WTC11 (cell line): ENCODE measurements at regions of chr17 and their contacts with region 1.

Region 1: GRCh38 chr17:79789534-79790353 is 7.1 kb downstream of the CBX8 start:
- DNase-seq: peak; percentile 82
- ATAC-seq: peak; percentile 50
- H3K4me3 Mint-ChIP-seq: peak overlapping the region; percentile 65
- H3K27ac Mint-ChIP-seq: no peak overlapping the region
- H3K4me1 Mint-ChIP-seq: peaks cover 48% of the 10 kb centered on the region
- H3K27me3 Mint-ChIP-seq: peaks cover 83% of the 10 kb centered on the region
- CTCF ChIP-seq: peak; percentile 65

Region 2: DNA sequence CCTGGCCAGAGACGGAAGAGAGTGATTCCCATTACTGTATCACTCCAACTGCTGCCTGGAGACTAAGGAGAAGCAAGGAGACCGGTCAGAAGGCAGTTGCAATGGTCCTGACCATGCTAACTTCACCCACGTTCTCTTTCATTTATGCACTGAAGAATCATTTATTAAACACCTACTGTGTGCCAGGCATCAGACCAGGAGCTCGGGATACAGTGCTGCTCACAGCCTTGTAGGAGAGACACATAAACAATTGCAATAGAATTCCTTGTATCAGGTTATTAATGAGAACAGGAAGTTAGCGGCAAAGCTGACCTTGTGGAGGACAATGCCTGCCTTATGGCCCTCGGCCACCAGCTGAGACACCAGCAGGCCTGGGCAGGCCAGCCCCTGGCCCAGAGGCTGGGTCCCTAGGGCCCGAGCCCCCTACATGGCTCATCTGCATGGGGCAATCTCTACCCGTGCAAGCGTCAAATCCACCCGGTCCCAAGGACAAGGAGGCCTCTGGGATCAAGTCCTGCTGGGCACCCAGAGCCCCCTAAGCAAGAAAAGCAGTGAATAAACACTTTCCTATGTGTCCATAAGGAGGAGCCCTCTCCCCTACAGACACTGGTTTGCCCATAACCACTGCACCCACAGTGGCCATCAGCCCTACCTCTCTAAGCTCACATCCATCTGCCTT is 67.6 kb before region 1 on chr17:
- CTCF ChIA-PET with region 1: interaction called, 10 read pairs
- POLR2A ChIA-PET with region 1: no interaction called
- DNase-seq: peak; percentile 31
- ATAC-seq: peak; percentile 96
- H3K4me3 Mint-ChIP-seq: no peak overlapping the region
- H3K27ac Mint-ChIP-seq: no peak overlapping the region
- H3K4me1 Mint-ChIP-seq: peaks cover 8% of the 10 kb centered on the region; the same call in 1 of the 2 replicates
- H3K27me3 Mint-ChIP-seq: peaks cover 4% of the 10 kb centered on the region; the same call in 1 of the 2 replicates
- CTCF ChIP-seq: peak; percentile 27; the same call in 1 of the 2 replicates

Region 3: GRCh38 chr17:79777894-79778503 is 11.7 kb before region 1 on chr17 and contains the start of gene CBX2:
- CTCF ChIA-PET with region 1: interaction called, 45 read pairs
- POLR2A ChIA-PET with region 1: interaction called, 5 read pairs
- DNase-seq: peak; percentile 75
- ATAC-seq: peak; percentile 55
- H3K4me3 Mint-ChIP-seq: peak within 1 kb of the TSS; percentile 91
- H3K27ac Mint-ChIP-seq: peak within 1 kb of the TSS; percentile 93
- H3K4me1 Mint-ChIP-seq: peaks cover 54% of the 10 kb centered on the region
- H3K27me3 Mint-ChIP-seq: peaks cover 15% of the 10 kb centered on the region
- CTCF ChIP-seq: no peak
- total RNA-seq, gene CBX2: 78.1 to 85.5 TPM (median 78.7 TPM) in 3 replicates

Region 4: GRCh38 chr17:79803997-79804855 is 14.5 kb after region 1 on chr17:
- CTCF ChIA-PET with region 1: interaction called, 14 read pairs
- POLR2A ChIA-PET with region 1: interaction called, 3 read pairs
- DNase-seq: peak; percentile 50
- ATAC-seq: no peak; the same call in 1 of the 2 replicates
- H3K4me3 Mint-ChIP-seq: peak overlapping the region; percentile 53
- H3K27ac Mint-ChIP-seq: no peak overlapping the region
- H3K4me1 Mint-ChIP-seq: peaks cover 62% of the 10 kb centered on the region
- H3K27me3 Mint-ChIP-seq: peaks cover 100% of the 10 kb centered on the region
- CTCF ChIP-seq: no peak

Region 5: GRCh38 chr17:79810130-79811010 is 20.6 kb after region 1 on chr17:
- CTCF ChIA-PET with region 1: interaction called, 14 read pairs
- POLR2A ChIA-PET with region 1: interaction called, 3 read pairs
- DNase-seq: peak; percentile 83
- ATAC-seq: peak; percentile 74
- H3K4me3 Mint-ChIP-seq: peak overlapping the region; percentile 59
- H3K27ac Mint-ChIP-seq: no peak overlapping the region
- H3K4me1 Mint-ChIP-seq: peaks cover 40% of the 10 kb centered on the region
- H3K27me3 Mint-ChIP-seq: peaks cover 92% of the 10 kb centered on the region
- CTCF ChIP-seq: no peak

Region 6: GRCh38 chr17:79826204-79826680 is 36.5 kb after region 1 on chr17:
- CTCF ChIA-PET with region 1: no interaction called
- POLR2A ChIA-PET with region 1: no interaction called
- DNase-seq: no peak
- ATAC-seq: no peak
- H3K4me3 Mint-ChIP-seq: no peak overlapping the region
- H3K27ac Mint-ChIP-seq: no peak overlapping the region
- H3K4me1 Mint-ChIP-seq: peaks cover 19% of the 10 kb centered on the region
- H3K27me3 Mint-ChIP-seq: peaks cover 98% of the 10 kb centered on the region
- CTCF ChIP-seq: no peak

Region 7: DNA sequence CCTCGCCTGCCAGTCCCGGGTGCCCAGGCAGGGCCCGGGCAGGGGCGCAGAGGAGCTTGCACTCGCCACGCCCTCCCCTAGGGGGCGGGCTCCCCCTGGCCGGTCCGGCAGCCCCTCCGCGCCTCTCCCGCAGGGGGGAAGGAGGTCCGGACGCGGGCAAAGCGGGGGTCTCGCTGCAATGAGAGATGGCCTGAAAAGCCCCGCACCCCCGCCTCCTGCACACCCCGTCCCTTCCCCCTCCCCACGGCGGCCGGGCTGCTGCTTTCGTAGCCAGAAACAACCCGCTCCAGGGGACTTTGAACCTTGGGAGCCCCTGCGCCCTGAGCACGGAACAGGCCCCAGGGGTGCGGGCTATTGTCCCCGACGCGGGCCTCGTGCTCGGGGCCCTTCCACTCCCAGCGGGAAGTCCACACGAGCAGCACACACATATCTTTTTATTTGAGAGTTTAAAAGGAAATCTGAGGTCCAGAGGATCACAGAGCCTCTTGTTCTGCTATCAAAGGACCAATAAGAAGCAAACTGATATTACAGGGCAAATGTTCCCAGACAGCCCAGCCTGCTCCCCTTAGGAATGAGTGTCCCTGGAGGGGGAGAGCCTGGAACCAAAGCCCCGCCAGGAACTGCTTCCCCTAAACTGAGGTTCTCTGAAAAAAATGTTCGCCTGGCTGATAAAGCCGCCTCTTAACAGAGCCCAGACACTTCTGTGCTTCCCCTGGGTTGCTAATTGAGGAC is 55.3 kb after region 1 on chr17:
- CTCF ChIA-PET with region 1: interaction called, 32 read pairs
- POLR2A ChIA-PET with region 1: no interaction called
- DNase-seq: peak; percentile 73
- ATAC-seq: peak; percentile 50
- H3K4me3 Mint-ChIP-seq: peak overlapping the region; percentile 61
- H3K27ac Mint-ChIP-seq: no peak overlapping the region
- H3K4me1 Mint-ChIP-seq: peaks cover 13% of the 10 kb centered on the region
- H3K27me3 Mint-ChIP-seq: peaks cover 87% of the 10 kb centered on the region
- CTCF ChIP-seq: peak; percentile 88